Posterior vena cava (tissue), 2 donors: ENCODE measurements at regions of chr12 and their contacts with region 1.

Region 1: GRCh38 chr12:67876305-67876915 is 112.8 kb upstream of the IFNG-AS1 start:
- DNase-seq: no peak

Region 2: GRCh38 chr12:67893022-67893580 is 16.7 kb after region 1 on chr12:
- intact Hi-C with region 1: loop called in 1 of 2 experiments (anchors 1 kb)
- DNase-seq: no peak